ENCODE measurements at regions of chr16 and their contacts with region 1.

Region 1: DNA sequence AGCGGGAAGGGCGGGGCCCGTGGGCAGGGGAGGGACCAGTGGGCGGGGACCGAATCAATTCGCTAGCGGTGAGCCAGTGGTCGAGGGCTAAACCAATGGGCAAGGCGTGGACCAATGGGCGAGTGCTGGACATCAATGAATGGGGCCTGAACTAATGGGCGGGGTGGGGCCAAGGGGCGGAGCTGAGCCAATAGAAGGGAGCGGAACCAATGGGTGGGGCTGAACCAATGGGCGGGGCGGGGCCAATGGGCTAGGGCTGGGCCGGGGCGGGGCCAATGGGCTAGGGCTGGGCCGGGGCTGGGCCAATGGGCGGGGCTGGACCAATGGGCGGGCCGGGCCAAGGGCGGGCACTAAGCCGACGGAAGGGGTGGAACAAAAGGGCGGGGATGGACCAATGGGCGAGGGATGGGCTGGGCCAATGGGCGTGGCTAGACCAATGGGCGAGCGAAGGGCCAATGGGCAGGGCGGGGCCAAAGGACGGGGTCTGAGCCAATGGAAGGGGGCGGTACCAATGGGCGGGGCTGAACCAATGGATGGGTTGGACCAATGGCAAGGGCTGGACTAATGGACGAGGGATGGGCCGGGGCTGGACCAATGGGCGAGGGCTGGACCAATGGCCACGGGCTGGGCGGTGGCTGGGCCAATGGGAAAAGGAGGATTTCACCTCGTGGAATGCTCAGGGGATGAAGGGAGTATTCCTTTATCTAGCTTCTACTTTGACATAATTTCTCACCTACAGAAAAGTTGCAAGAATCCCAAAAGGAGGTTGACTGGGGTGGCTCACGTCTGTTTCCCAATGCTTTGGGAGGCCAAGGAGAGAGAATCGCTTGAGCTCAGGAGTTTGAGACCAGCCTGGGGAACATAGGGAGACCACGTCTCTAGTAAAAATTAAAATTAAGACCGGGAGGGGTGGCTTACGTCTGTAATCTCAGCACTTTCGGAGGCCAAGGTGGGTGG is 6.0 kb upstream of the FLYWCH1 start:
- DNase-seq: peak; percentile 100
- ATAC-seq: peak; percentile 83 to 88
- H3K4me3 ChIP-seq: peak overlapping the region; percentile 77 to 91 (median 87)
- H3K27ac ChIP-seq: peak overlapping the region; percentile 91 to 96 (median 94)
- H3K4me1 ChIP-seq: peaks cover 11 to 14% of the 10 kb centered on the region in 2 donors
- H3K27me3 ChIP-seq: no peaks in the 10 kb centered on the region
- CTCF ChIP-seq: no peak
- POLR2A ChIP-seq: no peak

Region 2: GRCh38 chr16:2919511-2920255 is 14.0 kb after region 1 on chr16:
- in situ Hi-C with region 1: no loop called
- intact Hi-C with region 1: loop called (anchors 1 kb)
- DNase-seq: peak; percentile 49 to 70
- ATAC-seq: peak; percentile 84 to 85
- H3K4me3 ChIP-seq: no peak overlapping the region
- H3K27ac ChIP-seq: peak overlapping the region; percentile 64 to 74 (median 66)
- H3K4me1 ChIP-seq: peaks cover 3 to 6% of the 10 kb centered on the region in 2 donors
- H3K27me3 ChIP-seq: no peaks in the 10 kb centered on the region
- CTCF ChIP-seq: peak; percentile 91 to 97 (median 93)
- POLR2A ChIP-seq: no peak

Region 3: GRCh38 chr16:2926650-2927646 is 21.2 kb after region 1 on chr16:
- in situ Hi-C with region 1: no loop called
- intact Hi-C with region 1: loop called (anchors 2 kb)
- DNase-seq: peak; percentile 58 to 81
- ATAC-seq: peak; percentile 85 to 92
- H3K4me3 ChIP-seq: peak overlapping the region in 3 of 4 donors; percentile 5 to 34 (median 14)
- H3K27ac ChIP-seq: no peak overlapping the region
- H3K4me1 ChIP-seq: peaks cover 0 to 5% of the 10 kb centered on the region in 2 donors
- H3K27me3 ChIP-seq: no peaks in the 10 kb centered on the region
- CTCF ChIP-seq: peak; percentile 91 to 97 (median 95)
- POLR2A ChIP-seq: no peak

Region 4: GRCh38 chr16:2948807-2949738 is 43.4 kb after region 1 on chr16:
- in situ Hi-C with region 1: no loop called
- intact Hi-C with region 1: no loop called
- DNase-seq: peak in 1 of 2 donors; percentile 68
- ATAC-seq: peak in 1 of 2 donors; percentile 83
- H3K4me3 ChIP-seq: no peak overlapping the region
- H3K27ac ChIP-seq: peak overlapping the region in 1 of 4 donors; percentile 65
- H3K4me1 ChIP-seq: peaks cover 0 to 15% of the 10 kb centered on the region in 2 donors
- H3K27me3 ChIP-seq: peaks cover 0 to 2% (median 0%) of the 10 kb centered on the region in 3 donors
- CTCF ChIP-seq: no peak
- POLR2A ChIP-seq: no peak

Measured in gastrocnemius medialis (tissue), 4 donors.